Caco-2 (cell line): ENCODE measurements at regions of chr7 and their contacts with region 1.

Region 1: DNA sequence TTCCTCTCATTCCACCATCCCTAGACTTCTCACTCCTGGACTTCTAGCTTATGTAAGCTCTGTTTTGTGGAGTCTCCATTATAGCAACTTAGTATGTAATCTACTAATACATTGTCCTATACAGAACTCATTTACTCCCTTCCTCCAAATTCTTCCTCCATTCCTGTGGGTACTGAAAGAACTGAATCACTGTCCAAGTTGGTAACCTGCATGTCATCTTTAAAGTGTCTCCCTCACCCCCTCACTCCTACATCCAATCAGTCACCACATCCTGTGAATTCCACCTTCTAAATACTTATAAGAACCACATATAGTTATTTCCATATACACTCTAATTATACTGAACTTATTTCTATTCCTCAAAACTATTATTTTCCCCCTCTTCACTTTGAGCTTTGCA is 20.3 kb downstream of the AASS start:
- DNase-seq: no peak
- H3K4me3 ChIP-seq: no peak overlapping the region
- H3K4me3 Mint-ChIP-seq: no peak overlapping the region
- H3K27ac Mint-ChIP-seq: no peak overlapping the region
- H3K4me1 ChIP-seq: peaks cover 8% of the 10 kb centered on the region
- H3K4me1 Mint-ChIP-seq: peaks cover 8% of the 10 kb centered on the region
- H3K27me3 ChIP-seq: no peaks in the 10 kb centered on the region
- H3K27me3 Mint-ChIP-seq: no peaks in the 10 kb centered on the region
- CTCF ChIP-seq: no peak

Region 2: DNA sequence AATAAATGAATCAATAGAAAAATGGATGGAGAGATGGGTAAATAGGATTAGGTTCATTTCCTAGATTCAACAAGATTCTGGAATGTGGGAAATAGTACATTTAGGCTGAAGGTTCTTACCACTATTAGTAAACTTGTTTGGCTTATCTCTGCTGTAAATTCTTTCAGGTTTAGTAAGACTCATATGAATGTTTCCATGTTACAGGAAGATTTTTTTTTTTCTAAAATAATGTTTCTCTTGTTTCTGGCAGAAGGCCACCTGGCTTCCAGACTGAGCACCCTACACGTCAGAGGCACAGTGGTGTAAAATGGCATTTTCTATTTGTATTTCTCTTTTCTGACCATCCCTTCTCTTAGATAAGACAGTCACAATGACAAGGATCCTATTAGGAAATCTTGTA is 43.0 kb after region 1 on chr7:
- CTCF ChIA-PET with region 1: no interaction called
- POLR2A ChIA-PET with region 1: no interaction called
- intact Hi-C with region 1: loop called (anchors 2 kb)
- DNase-seq: peak; percentile 35 to 57
- H3K4me3 ChIP-seq: no peak overlapping the region
- H3K4me3 Mint-ChIP-seq: no peak overlapping the region
- H3K27ac Mint-ChIP-seq: no peak overlapping the region
- H3K4me1 ChIP-seq: peaks cover 35% of the 10 kb centered on the region
- H3K4me1 Mint-ChIP-seq: peaks cover 5% of the 10 kb centered on the region
- H3K27me3 ChIP-seq: no peaks in the 10 kb centered on the region
- H3K27me3 Mint-ChIP-seq: no peaks in the 10 kb centered on the region
- CTCF ChIP-seq: no peak